ENCODE measurements at regions of chr11 and their contacts with region 1.

Region 1: DNA sequence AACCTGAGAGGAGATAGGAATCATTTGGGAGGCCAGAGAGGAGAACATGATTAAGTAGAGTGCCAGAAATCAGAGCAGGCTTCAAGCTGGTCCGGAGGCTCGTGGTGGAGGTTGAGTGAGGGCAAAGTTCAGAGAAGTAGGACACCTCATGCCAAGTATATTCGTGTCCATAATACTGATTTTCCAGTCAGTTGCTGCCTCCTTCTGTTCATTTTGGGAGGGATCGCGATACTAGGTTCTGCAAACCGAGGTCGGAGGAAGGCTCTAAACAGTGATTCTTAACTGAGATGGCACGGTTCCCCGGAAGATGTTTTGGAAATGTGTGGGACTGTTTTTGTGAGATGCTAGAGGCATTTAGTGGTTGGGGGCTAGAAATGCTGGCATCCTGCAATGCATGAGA is 13.6 kb upstream of the CD3E start:
- DNase-seq: peak in 1 of 5 donors; percentile 23
- ATAC-seq: peak; percentile 67 to 88 (median 82)
- H3K4me3 ChIP-seq: peak overlapping the region in 1 of 12 donors; percentile 9
- H3K27ac ChIP-seq: peak overlapping the region in 1 of 12 donors; percentile 10
- H3K4me1 ChIP-seq: no peaks in the 10 kb centered on the region
- H3K27me3 ChIP-seq: no peaks in the 10 kb centered on the region
- CTCF ChIP-seq: peak in 11 of 12 donors; percentile 18 to 61 (median 44)
- POLR2A ChIP-seq: no peak

Region 2: GRCh38 chr11:118152552-118153471 is 138.1 kb before region 1 on chr11 and contains the start of gene SCN4B:
- intact Hi-C with region 1: loop called in 4 of 10 experiments (anchors 5 kb)
- DNase-seq: peak; percentile 74 to 86 (median 81)
- ATAC-seq: peak; percentile 22 to 88 (median 78)
- H3K4me3 ChIP-seq: peak within 1 kb of the TSS; percentile 40 to 72 (median 58)
- H3K27ac ChIP-seq: peak within 1 kb of the TSS in 10 of 12 donors; percentile 30 to 69 (median 62)
- H3K4me1 ChIP-seq: peaks cover 0 to 36% (median 10%) of the 10 kb centered on the region in 12 donors
- H3K27me3 ChIP-seq: peaks cover 0 to 60% (median 5%) of the 10 kb centered on the region in 9 donors
- CTCF ChIP-seq: no peak
- POLR2A ChIP-seq: no peak
- total RNA-seq, gene SCN4B: 2.1 to 16.9 (median 12.7) TPM

Region 3: GRCh38 chr11:118263695-118264567 is 27.0 kb before region 1 on chr11 and contains the start of gene MPZL2:
- intact Hi-C with region 1: no loop called
- DNase-seq: peak in 4 of 5 donors; percentile 17 to 39 (median 29)
- ATAC-seq: peak; percentile 58 to 88 (median 83)
- H3K4me3 ChIP-seq: peak within 1 kb of the TSS in 11 of 12 donors; percentile 11 to 59 (median 48)
- H3K27ac ChIP-seq: peak within 1 kb of the TSS in 8 of 12 donors; percentile 7 to 69 (median 51)
- H3K4me1 ChIP-seq: peaks cover 0 to 24% (median 0%) of the 10 kb centered on the region in 12 donors
- H3K27me3 ChIP-seq: peaks cover 0 to 8% (median 0%) of the 10 kb centered on the region in 9 donors
- CTCF ChIP-seq: no peak
- POLR2A ChIP-seq: no peak
- total RNA-seq, gene MPZL2: 8.3 to 29.6 (median 13.2) TPM